Activated CD4-positive, alpha-beta memory T cell treated with anti-CD3 and anti-CD28 coated beads, Interleukin-2, amount 10 ng/mL, durations not matched to agents 7 days and 5 days (primary cell): ENCODE measurements at regions of chr22 and their contacts with region 1.

Region 1: DNA sequence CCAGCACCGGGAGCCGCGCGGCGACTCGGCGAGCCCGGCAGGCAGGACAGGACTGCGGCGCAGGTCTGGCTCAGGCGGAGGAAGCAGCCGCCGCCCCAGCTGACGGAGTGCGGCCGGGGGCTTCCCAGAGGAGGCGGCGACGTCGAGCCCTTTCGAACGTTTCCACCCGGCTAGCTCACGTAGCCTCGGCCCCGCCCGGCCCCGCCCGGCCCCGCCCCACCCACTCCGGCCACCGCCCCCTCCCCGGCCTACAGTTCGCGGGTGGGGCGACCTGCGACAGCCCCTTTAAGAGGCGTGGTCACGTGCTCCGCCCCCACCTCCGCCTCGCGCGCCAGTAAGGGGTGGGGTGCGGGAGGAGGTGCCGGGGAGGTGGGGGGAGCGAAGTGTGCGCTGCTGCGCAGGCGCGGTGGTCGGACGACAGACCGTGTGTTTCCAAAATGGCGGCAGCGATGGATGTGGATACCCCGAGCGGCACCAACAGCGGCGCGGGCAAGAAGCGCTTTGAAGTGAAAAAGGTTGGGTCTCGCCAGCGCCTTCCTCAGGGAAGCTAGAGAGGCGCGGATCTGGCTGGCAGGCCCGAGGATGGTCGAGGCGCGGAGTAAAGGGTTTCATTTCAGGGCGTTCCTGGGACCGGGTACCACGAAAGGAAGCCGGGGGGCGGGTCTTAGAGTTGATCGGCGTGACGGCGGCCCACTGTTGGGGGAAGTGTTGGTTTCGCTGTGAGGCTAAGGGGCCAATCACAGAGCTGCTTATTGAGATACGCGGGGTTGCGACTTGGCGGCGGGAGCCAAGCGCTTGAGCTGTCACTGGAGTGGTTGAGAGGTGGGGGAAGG is at the start of gene RBX1:
- DNase-seq: peak; percentile 99
- H3K4me3 Mint-ChIP-seq: peak within 1 kb of the TSS; percentile 95
- H3K27ac Mint-ChIP-seq: peak within 1 kb of the TSS; percentile 98
- H3K4me1 Mint-ChIP-seq: peaks cover 45% of the 10 kb centered on the region
- H3K27me3 Mint-ChIP-seq: no peaks in the 10 kb centered on the region
- total RNA-seq, gene RBX1: 80.7 TPM

Region 2: GRCh38 chr22:40797427-40797826 is 153.8 kb before region 1 on chr22:
- CTCF ChIA-PET with region 1: no interaction called
- POLR2A ChIA-PET with region 1: no interaction called
- DNase-seq: no peak
- H3K4me3 Mint-ChIP-seq: no peak overlapping the region
- H3K27ac Mint-ChIP-seq: no peak overlapping the region
- H3K4me1 Mint-ChIP-seq: peaks cover 1% of the 10 kb centered on the region
- H3K27me3 Mint-ChIP-seq: no peaks in the 10 kb centered on the region

Region 3: DNA sequence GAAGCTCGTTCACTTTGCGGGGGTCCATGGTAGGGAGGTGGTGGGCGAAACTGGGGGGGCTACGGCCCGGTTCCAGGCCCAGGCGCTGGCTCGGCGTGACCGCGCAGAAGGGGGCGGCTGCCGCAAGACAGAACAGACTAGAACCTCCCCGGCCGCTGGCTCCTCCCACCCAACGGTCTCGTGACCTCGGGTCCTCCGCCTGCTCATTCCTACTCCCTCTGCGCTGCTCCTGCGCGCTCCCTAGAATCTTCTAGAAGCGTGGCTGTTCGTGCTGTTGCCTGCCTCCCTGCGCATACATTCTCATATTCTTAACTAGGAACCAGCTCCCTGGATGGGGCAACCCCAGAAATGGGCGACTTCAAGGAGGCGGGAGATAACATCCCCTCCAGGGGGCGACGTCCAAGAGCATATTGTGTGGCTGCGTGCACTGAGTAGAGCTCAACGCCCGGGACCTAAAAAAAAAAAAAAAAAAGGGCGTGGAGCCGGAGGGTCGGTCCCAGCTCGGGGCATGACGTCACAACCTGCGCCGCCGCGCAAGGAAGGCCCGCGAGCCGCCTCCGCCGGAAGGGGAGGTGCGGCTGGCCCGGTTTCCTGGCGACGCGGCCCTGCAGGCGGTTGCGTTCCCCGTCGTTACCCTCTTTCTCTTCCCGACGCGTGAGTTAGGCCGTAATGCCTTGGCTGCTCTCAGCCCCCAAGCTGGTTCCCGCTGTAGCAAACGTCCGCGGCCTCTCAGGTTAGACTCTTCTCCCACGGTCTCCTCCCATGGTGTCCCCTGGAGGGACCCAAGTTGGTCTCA is 94.5 kb before region 1 on chr22 and contains the starts of genes ST13 and XPNPEP3:
- CTCF ChIA-PET with region 1: no interaction called
- POLR2A ChIA-PET with region 1: interaction called, 12 read pairs
- DNase-seq: peak; percentile 97
- H3K4me3 Mint-ChIP-seq: peak within 1 kb of the TSS; percentile 95
- H3K27ac Mint-ChIP-seq: peak within 1 kb of the TSS; percentile 99
- H3K4me1 Mint-ChIP-seq: peaks cover 50% of the 10 kb centered on the region
- H3K27me3 Mint-ChIP-seq: no peaks in the 10 kb centered on the region
- total RNA-seq, gene ST13: 138 to 142 TPM
- total RNA-seq, gene XPNPEP3: 11.3 to 13.2 TPM

Region 4: DNA sequence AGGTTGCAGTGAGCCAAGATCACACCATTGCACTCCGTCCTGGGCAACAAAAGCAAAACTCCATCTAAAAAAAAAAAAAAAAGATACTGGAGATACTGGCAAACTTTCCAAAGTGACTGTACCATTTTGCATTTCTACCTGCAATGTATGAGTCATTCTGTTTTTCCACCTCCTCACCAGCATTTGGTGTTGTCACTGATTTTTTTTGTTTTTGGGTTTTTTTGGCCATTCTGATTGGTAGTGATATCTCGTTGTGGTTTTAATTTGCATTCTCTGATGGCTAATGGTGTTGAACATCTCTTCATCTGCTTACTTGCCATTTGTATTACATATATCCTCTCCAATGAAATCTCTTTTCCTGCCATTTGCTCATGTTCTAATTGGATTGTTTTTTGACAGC is 12.0 kb before region 1 on chr22:
- CTCF ChIA-PET with region 1: no interaction called
- POLR2A ChIA-PET with region 1: interaction called, 16 read pairs
- DNase-seq: no peak
- H3K4me3 Mint-ChIP-seq: no peak overlapping the region
- H3K27ac Mint-ChIP-seq: no peak overlapping the region
- H3K4me1 Mint-ChIP-seq: peaks cover 9% of the 10 kb centered on the region
- H3K27me3 Mint-ChIP-seq: no peaks in the 10 kb centered on the region

Region 5: GRCh38 chr22:40973099-40973498 is 21.9 kb after region 1 on chr22:
- CTCF ChIA-PET with region 1: no interaction called
- POLR2A ChIA-PET with region 1: interaction called, 18 read pairs
- DNase-seq: no peak
- H3K4me3 Mint-ChIP-seq: no peak overlapping the region
- H3K27ac Mint-ChIP-seq: no peak overlapping the region
- H3K4me1 Mint-ChIP-seq: peaks cover 2% of the 10 kb centered on the region
- H3K27me3 Mint-ChIP-seq: no peaks in the 10 kb centered on the region

Region 6: DNA sequence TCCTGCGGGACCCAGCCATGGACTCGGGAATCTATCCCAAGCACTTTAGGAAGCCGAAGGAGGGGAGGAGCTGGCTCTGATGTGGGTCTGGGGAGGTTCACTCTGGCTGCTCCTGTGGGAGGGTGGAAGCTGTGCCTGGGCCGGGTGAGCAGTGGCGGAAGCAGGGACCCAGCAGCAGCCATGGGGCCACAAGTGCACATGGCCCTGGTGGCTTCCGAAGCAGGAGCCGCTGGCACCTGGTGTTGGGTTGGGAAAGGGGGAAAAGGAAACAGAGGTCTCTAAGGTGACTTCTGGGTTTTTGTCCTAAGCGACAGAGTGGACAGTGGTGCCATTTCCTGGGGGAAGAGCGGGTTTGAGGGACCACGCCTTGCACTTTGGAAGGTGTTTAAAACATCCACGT is 39.3 kb after region 1 on chr22:
- CTCF ChIA-PET with region 1: no interaction called
- POLR2A ChIA-PET with region 1: no interaction called
- DNase-seq: no peak
- H3K4me3 Mint-ChIP-seq: no peak overlapping the region
- H3K27ac Mint-ChIP-seq: no peak overlapping the region
- H3K4me1 Mint-ChIP-seq: no peaks in the 10 kb centered on the region
- H3K27me3 Mint-ChIP-seq: peaks cover 23% of the 10 kb centered on the region

Region 7: GRCh38 chr22:41070665-41071331 is 119.6 kb after region 1 on chr22:
- CTCF ChIA-PET with region 1: no interaction called
- POLR2A ChIA-PET with region 1: interaction called, 10 read pairs
- DNase-seq: no peak
- H3K4me3 Mint-ChIP-seq: no peak overlapping the region
- H3K27ac Mint-ChIP-seq: no peak overlapping the region
- H3K4me1 Mint-ChIP-seq: peaks cover 10% of the 10 kb centered on the region
- H3K27me3 Mint-ChIP-seq: no peaks in the 10 kb centered on the region

Region 8: DNA sequence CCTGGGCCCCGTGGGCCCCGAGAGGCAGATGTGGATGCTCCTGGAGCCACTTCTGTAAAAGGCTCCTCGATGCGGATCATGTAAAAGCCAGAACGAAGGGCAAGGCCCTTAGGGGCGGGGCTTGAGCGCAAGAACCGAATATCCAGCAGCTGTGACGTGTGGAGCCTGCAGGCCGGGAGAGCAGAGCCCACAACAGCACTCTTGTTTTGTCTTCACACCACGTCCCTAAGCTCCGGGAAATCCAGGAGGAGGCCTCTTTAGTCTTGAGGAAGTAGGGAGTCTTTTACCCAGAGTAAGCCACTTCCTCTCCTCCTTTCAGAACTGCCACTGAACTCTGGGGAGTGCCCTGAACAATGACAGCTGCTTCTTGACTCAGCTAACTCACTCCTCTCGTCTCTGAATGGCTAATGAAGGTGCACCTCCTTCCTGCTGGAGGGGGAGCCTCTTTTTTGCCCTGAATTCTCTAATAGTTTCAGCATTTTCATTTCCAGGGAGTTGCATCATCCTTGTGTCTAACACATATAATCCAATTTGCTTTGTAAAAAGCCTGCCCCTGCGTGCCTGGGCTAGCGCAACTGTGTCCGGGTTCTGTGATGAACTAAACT is 266.5 kb after region 1 on chr22:
- CTCF ChIA-PET with region 1: no interaction called
- POLR2A ChIA-PET with region 1: interaction called, 11 read pairs
- DNase-seq: peak; percentile 66
- H3K4me3 Mint-ChIP-seq: peak overlapping the region; percentile 67
- H3K27ac Mint-ChIP-seq: peak overlapping the region; percentile 86
- H3K4me1 Mint-ChIP-seq: peaks cover 35% of the 10 kb centered on the region
- H3K27me3 Mint-ChIP-seq: no peaks in the 10 kb centered on the region

Region 9: GRCh38 chr22:41448189-41448808 is 497.1 kb after region 1 on chr22:
- CTCF ChIA-PET with region 1: no interaction called
- POLR2A ChIA-PET with region 1: interaction called, 11 read pairs
- DNase-seq: peak; percentile 94
- H3K4me3 Mint-ChIP-seq: peak overlapping the region; percentile 95
- H3K27ac Mint-ChIP-seq: peak overlapping the region; percentile 93
- H3K4me1 Mint-ChIP-seq: peaks cover 22% of the 10 kb centered on the region
- H3K27me3 Mint-ChIP-seq: no peaks in the 10 kb centered on the region